Naive thymus-derived CD4-positive, alpha-beta T cell (primary cell): ENCODE measurements at regions of chr4 and their contacts with region 1.

Region 1: GRCh38 chr4:163663454-163664225 is 169.2 kb downstream of the TMA16 start:
- DNase-seq: no peak
- ATAC-seq: no peak
- H3K4me3 ChIP-seq: no peak overlapping the region
- H3K4me3 Mint-ChIP-seq: peak overlapping the region in 5 of 10 donors; percentile 8 to 51 (median 28)
- H3K27ac ChIP-seq: no peak overlapping the region
- H3K27ac Mint-ChIP-seq: peak overlapping the region in 3 of 9 donors; percentile 24 to 63 (median 31)
- H3K4me1 ChIP-seq: peaks cover 2 to 35% of the 10 kb centered on the region in 2 donors
- H3K4me1 Mint-ChIP-seq: peaks cover 2 to 71% (median 52%) of the 10 kb centered on the region in 7 donors
- H3K27me3 ChIP-seq: no peaks in the 10 kb centered on the region
- H3K27me3 Mint-ChIP-seq: no peaks in the 10 kb centered on the region

Region 2: GRCh38 chr4:163166041-163166579 is 497.5 kb before region 1 on chr4:
- CTCF ChIA-PET with region 1: no interaction called
- POLR2A ChIA-PET with region 1: no interaction called
- intact Hi-C with region 1: loop called in 1 of 2 experiments (anchors 5 kb)
- DNase-seq: peak; percentile 42 to 70 (median 63)
- ATAC-seq: peak; percentile 60
- H3K4me3 ChIP-seq: peak overlapping the region; percentile 69
- H3K4me3 Mint-ChIP-seq: peak overlapping the region; percentile 88 to 98 (median 92)
- H3K27ac ChIP-seq: peak overlapping the region; percentile 98
- H3K27ac Mint-ChIP-seq: peak overlapping the region; percentile 97 to 100 (median 99)
- H3K4me1 ChIP-seq: peaks cover 5 to 19% of the 10 kb centered on the region in 2 donors
- H3K4me1 Mint-ChIP-seq: peaks cover 28 to 67% (median 54%) of the 10 kb centered on the region in 7 donors
- H3K27me3 ChIP-seq: no peaks in the 10 kb centered on the region
- H3K27me3 Mint-ChIP-seq: no peaks in the 10 kb centered on the region

Region 3: DNA sequence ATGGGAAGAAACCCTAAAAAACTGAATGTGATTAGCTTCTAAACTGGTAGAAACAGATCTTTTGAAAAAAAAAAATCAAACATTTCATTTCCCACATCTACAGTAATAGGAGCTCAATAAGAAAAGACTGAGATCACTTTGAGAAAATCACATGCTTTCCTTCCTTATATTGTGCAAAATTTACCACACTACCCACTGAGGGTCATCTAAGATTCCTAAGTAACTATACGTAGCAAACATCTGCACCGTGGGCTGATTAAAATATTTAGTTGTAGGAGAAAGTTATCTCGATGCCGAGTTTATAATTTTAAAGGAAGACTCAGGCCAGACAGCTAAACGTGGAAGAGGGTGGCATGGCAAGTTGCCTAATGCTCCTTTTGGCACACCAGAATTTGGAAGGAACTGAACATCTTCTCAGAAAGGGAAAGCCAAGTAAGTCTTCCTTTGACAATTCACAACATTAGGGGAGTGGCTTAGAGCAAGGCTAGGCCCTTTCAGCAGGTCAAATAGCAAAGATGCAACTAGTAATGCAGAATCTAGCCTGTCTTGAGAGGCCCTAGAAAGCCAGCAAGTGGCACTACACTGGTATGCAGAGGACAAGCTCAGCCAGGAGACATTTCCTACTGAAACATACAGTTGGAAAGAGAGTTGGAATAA is 41.1 kb before region 1 on chr4:
- CTCF ChIA-PET with region 1: no interaction called
- POLR2A ChIA-PET with region 1: no interaction called
- intact Hi-C with region 1: loop called in 1 of 2 experiments (anchors 2 kb)
- DNase-seq: no peak
- ATAC-seq: no peak
- H3K4me3 ChIP-seq: no peak overlapping the region
- H3K4me3 Mint-ChIP-seq: peak overlapping the region in 1 of 10 donors; percentile 20
- H3K27ac ChIP-seq: no peak overlapping the region
- H3K27ac Mint-ChIP-seq: no peak overlapping the region
- H3K4me1 ChIP-seq: peaks cover 0 to 18% of the 10 kb centered on the region in 2 donors
- H3K4me1 Mint-ChIP-seq: peaks cover 0 to 53% (median 43%) of the 10 kb centered on the region in 7 donors
- H3K27me3 ChIP-seq: no peaks in the 10 kb centered on the region
- H3K27me3 Mint-ChIP-seq: peaks cover 0 to 6% (median 0%) of the 10 kb centered on the region in 5 donors

Region 4: GRCh38 chr4:163673848-163674697 is 10.4 kb after region 1 on chr4:
- CTCF ChIA-PET with region 1: interaction called, 11 read pairs
- POLR2A ChIA-PET with region 1: no interaction called
- intact Hi-C with region 1: loop called in 1 of 2 experiments (anchors 1 kb)
- DNase-seq: no peak
- ATAC-seq: no peak
- H3K4me3 ChIP-seq: no peak overlapping the region
- H3K4me3 Mint-ChIP-seq: no peak overlapping the region
- H3K27ac ChIP-seq: no peak overlapping the region
- H3K27ac Mint-ChIP-seq: no peak overlapping the region
- H3K4me1 ChIP-seq: no peaks in the 10 kb centered on the region
- H3K4me1 Mint-ChIP-seq: peaks cover 0 to 52% (median 28%) of the 10 kb centered on the region in 7 donors
- H3K27me3 ChIP-seq: no peaks in the 10 kb centered on the region
- H3K27me3 Mint-ChIP-seq: no peaks in the 10 kb centered on the region

Region 5: GRCh38 chr4:163681208-163681821 is 17.7 kb after region 1 on chr4:
- CTCF ChIA-PET with region 1: interaction called, 11 read pairs
- POLR2A ChIA-PET with region 1: no interaction called
- intact Hi-C with region 1: no loop called
- DNase-seq: peak in 7 of 9 donors; percentile 53 to 72 (median 69)
- ATAC-seq: peak; percentile 92
- H3K4me3 ChIP-seq: no peak overlapping the region
- H3K4me3 Mint-ChIP-seq: no peak overlapping the region
- H3K27ac ChIP-seq: no peak overlapping the region
- H3K27ac Mint-ChIP-seq: no peak overlapping the region
- H3K4me1 ChIP-seq: peaks cover 0 to 4% of the 10 kb centered on the region in 2 donors
- H3K4me1 Mint-ChIP-seq: peaks cover 0 to 31% (median 10%) of the 10 kb centered on the region in 7 donors
- H3K27me3 ChIP-seq: no peaks in the 10 kb centered on the region
- H3K27me3 Mint-ChIP-seq: peaks cover 0 to 4% (median 0%) of the 10 kb centered on the region in 5 donors

Region 6: DNA sequence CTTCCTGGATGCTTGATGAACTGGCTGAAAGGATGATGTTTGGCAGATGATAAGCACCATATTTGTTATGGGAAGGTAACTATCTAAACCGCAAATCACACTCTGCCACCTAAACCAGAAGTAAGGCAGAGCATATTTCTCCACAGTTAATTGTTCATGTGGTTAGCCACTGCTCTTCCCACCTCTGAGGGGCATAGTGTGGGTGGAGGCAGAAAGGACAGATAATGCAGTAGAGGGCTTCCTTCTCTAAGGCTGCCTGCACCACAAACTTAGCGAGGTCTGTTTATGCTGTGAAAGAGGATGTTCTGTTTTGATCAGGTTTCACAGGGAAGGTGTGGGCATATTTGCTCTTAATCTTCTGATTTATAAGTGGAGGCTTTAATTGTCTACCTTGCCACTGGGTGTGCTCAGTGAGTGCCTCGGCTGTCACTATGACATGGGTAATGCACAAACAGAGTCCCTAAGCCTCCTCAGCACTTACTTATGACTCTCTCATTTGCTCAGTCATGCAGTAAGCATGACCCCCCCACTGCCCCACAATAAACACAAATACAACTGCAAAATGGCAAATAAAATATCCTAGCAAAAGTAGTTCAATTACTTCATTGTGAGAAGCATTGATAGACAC is 231.9 kb after region 1 on chr4:
- CTCF ChIA-PET with region 1: no interaction called
- POLR2A ChIA-PET with region 1: no interaction called
- intact Hi-C with region 1: loop called in 1 of 2 experiments (anchors 10 kb)
- DNase-seq: peak in 7 of 9 donors; percentile 25 to 84 (median 43)
- ATAC-seq: peak; percentile 71
- H3K4me3 ChIP-seq: no peak overlapping the region
- H3K4me3 Mint-ChIP-seq: peak overlapping the region in 8 of 10 donors; percentile 24 to 65 (median 51)
- H3K27ac ChIP-seq: no peak overlapping the region
- H3K27ac Mint-ChIP-seq: peak overlapping the region in 7 of 9 donors; percentile 22 to 85 (median 63)
- H3K4me1 ChIP-seq: peaks cover 0 to 5% of the 10 kb centered on the region in 2 donors
- H3K4me1 Mint-ChIP-seq: peaks cover 0 to 43% (median 27%) of the 10 kb centered on the region in 7 donors
- H3K27me3 ChIP-seq: no peaks in the 10 kb centered on the region
- H3K27me3 Mint-ChIP-seq: peaks cover 0 to 7% (median 0%) of the 10 kb centered on the region in 5 donors

Region 7: GRCh38 chr4:164154416-164154815 is 490.8 kb after region 1 on chr4:
- CTCF ChIA-PET with region 1: no interaction called
- POLR2A ChIA-PET with region 1: no interaction called
- intact Hi-C with region 1: no loop called
- DNase-seq: no peak
- ATAC-seq: no peak
- H3K4me3 ChIP-seq: no peak overlapping the region
- H3K4me3 Mint-ChIP-seq: no peak overlapping the region
- H3K27ac ChIP-seq: no peak overlapping the region
- H3K27ac Mint-ChIP-seq: no peak overlapping the region
- H3K4me1 ChIP-seq: no peaks in the 10 kb centered on the region
- H3K4me1 Mint-ChIP-seq: no peaks in the 10 kb centered on the region
- H3K27me3 ChIP-seq: peaks cover 0 to 4% of the 10 kb centered on the region in 2 donors
- H3K27me3 Mint-ChIP-seq: no peaks in the 10 kb centered on the region